Activated CD4-positive, alpha-beta memory T cell treated with anti-CD3 and anti-CD28 coated beads, Interleukin-2, amount 10 ng/mL, durations not matched to agents 7 days and 5 days (primary cell): ENCODE measurements at regions of chr4 and their contacts with region 1.

Region 1: DNA sequence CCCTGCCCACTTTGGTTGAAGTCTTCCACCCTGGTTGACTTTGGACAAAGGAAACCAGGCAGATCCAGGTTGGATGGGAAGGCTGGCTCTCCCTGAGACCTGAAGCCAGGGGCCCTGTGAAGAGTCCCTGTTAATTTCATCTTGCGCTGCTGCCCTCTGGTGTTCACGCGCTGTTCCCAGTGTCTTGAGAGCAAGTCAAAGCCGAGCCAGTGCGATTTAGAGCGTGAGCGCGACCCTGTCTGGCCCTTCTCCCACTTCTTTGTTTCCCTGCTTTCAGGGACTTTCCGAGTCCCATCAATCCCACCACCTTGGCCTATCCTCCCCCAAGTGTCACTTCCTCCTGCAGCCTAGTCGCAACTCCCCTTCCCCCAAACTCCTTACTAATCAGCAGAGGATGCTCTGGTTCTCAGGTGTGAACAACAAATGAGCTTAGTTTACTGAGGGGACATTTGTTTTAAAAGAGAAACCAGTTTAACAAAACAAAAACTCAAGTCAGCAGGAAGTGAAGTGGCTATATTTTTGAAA is 25.8 kb upstream of the CHRNA9 start:
- DNase-seq: peak; percentile 92
- H3K4me3 Mint-ChIP-seq: peak overlapping the region; percentile 73
- H3K27ac Mint-ChIP-seq: peak overlapping the region; percentile 98
- H3K4me1 Mint-ChIP-seq: peaks cover 71% of the 10 kb centered on the region
- H3K27me3 Mint-ChIP-seq: peaks cover 5% of the 10 kb centered on the region

Region 2: DNA sequence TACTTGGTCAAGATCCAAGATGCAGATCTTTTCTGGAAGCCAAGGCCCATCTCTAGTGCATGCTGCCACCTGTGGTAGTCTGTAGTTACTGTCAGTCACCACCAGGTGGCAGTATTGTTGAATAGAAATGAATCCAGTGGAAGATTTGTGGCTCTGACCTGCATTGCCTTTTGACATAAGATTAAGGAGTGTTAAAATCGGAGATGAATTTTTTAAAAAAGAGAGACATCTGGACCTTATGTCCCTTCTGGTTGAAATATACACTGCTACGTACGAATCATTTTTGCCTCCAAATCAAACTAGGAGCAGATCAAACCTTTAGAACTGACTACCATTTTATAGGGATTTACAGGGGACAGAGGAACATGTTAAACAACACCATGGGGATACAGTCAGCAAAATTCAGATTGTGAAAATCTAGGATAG is 159.3 kb before region 1 on chr4:
- CTCF ChIA-PET with region 1: interaction called, 19 read pairs
- POLR2A ChIA-PET with region 1: interaction called, 6 read pairs
- DNase-seq: peak; percentile 71
- H3K4me3 Mint-ChIP-seq: no peak overlapping the region
- H3K27ac Mint-ChIP-seq: no peak overlapping the region
- H3K4me1 Mint-ChIP-seq: peaks cover 17% of the 10 kb centered on the region
- H3K27me3 Mint-ChIP-seq: no peaks in the 10 kb centered on the region

Region 3: DNA sequence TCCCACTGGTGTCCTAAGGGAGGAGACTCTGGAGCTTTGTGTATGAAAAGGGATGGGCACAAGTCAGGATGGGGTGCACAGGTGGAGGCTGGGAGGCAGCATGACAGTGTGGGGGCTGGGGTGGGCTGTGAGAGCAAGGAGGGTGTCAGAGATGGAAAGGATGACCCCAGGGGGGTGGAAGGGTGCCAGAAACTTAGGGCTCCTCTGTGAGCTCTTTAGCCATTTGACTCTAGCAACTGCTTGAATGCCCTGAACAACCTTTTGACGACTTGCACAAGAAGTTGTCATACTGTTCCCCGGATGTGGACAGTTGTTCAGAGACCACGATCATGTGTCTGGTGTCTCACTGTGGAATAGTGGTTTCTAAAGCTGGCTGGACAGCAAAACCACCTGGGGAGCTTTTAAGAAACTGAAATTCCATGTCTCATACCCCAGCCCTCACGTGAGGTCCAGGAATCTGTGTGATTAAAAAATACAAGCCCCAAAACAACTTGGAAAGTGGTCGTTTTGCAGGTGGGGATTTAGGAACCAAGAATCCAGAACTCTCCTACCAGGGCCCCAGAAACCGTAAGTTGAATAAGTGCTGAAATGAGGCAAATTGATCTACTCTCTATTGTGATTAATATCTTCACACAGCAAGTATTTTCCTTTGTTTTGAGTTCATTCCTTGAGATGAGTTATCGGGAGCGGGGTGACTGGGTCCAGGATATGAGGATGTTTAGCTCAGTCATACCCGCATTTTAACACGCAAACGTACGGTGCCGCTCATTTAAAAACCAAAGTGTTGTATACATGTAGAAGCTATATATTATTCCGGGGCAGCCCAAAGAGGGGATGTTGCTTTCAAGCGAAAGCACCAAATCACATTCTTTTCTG is 109.1 kb before region 1 on chr4:
- CTCF ChIA-PET with region 1: interaction called, 20 read pairs
- POLR2A ChIA-PET with region 1: interaction called, 143 read pairs
- DNase-seq: peak; percentile 86
- H3K4me3 Mint-ChIP-seq: peak overlapping the region; percentile 97
- H3K27ac Mint-ChIP-seq: peak overlapping the region; percentile 99
- H3K4me1 Mint-ChIP-seq: peaks cover 43% of the 10 kb centered on the region
- H3K27me3 Mint-ChIP-seq: no peaks in the 10 kb centered on the region

Region 4: DNA sequence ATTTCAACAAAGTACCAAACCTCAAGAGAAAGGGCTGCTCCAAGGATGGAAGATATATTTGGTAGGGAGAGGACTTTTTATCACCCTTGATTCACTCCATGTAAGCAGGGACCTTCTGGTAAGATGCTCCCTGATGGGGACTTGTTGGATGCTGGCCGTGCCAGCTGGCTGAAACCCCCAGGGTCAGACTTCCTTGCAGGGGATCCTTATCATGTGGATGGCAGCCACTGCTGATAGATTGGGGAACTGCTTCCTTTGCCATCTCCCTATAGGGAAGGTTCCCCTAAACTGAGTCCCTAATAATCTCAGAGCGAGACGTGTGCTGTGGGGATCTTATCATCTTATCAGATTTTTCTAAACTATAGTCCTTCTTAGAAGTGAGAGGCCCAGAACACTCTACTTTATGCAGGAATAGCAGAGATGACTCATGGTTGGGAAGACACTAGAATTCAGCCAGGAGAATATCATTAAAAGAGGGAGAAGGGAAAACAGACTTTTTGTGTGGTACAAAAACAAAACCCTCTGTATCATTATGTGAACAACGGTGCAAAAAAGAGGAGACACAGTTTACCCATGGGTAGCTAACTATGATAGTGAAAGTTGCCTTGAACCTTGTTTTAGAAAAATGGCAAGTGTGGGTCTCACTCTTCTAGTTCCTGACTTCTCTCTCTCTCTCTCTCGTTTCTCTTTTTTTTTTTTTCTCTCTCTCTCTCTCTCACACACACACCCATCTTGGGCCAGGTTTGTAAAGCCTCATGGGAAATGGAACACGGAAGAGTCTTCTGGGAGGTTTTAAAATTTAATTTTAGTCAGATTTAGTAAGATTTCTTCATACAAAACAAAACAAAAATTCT is 96.4 kb before region 1 on chr4:
- CTCF ChIA-PET with region 1: interaction called, 10 read pairs
- POLR2A ChIA-PET with region 1: interaction called, 104 read pairs
- DNase-seq: no peak
- H3K4me3 Mint-ChIP-seq: peak overlapping the region; percentile 74
- H3K27ac Mint-ChIP-seq: peak overlapping the region; percentile 80
- H3K4me1 Mint-ChIP-seq: peaks cover 92% of the 10 kb centered on the region
- H3K27me3 Mint-ChIP-seq: no peaks in the 10 kb centered on the region

Region 5: GRCh38 chr4:40238700-40239548 is 70.4 kb before region 1 on chr4:
- CTCF ChIA-PET with region 1: interaction called, 22 read pairs
- POLR2A ChIA-PET with region 1: interaction called, 24 read pairs
- DNase-seq: peak; percentile 87
- H3K4me3 Mint-ChIP-seq: peak overlapping the region; percentile 67
- H3K27ac Mint-ChIP-seq: peak overlapping the region; percentile 93
- H3K4me1 Mint-ChIP-seq: peaks cover 89% of the 10 kb centered on the region
- H3K27me3 Mint-ChIP-seq: no peaks in the 10 kb centered on the region

Region 6: DNA sequence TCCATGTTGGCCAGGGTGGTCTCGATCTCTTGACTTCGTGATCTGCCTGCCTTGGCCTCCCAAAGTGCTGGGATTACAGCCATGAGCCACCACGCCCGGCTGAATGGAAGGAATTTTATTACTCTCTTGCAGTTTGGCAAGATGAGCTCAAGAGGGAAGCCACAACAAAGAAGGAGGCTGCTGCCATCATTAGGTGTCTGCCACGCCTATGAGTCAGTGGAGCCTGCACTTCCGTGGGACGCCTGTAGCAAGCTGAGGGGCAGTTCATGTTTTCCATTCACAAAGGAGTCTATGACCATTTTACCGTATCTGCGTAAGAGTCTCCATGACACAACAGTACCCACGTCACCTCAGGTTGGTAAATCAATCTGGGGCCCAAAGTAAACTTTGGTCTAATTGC is 25.3 kb before region 1 on chr4:
- CTCF ChIA-PET with region 1: interaction called, 17 read pairs
- POLR2A ChIA-PET with region 1: interaction called, 21 read pairs
- DNase-seq: peak; percentile 78
- H3K4me3 Mint-ChIP-seq: no peak overlapping the region
- H3K27ac Mint-ChIP-seq: peak overlapping the region; percentile 71
- H3K4me1 Mint-ChIP-seq: peaks cover 30% of the 10 kb centered on the region
- H3K27me3 Mint-ChIP-seq: no peaks in the 10 kb centered on the region

Region 7: DNA sequence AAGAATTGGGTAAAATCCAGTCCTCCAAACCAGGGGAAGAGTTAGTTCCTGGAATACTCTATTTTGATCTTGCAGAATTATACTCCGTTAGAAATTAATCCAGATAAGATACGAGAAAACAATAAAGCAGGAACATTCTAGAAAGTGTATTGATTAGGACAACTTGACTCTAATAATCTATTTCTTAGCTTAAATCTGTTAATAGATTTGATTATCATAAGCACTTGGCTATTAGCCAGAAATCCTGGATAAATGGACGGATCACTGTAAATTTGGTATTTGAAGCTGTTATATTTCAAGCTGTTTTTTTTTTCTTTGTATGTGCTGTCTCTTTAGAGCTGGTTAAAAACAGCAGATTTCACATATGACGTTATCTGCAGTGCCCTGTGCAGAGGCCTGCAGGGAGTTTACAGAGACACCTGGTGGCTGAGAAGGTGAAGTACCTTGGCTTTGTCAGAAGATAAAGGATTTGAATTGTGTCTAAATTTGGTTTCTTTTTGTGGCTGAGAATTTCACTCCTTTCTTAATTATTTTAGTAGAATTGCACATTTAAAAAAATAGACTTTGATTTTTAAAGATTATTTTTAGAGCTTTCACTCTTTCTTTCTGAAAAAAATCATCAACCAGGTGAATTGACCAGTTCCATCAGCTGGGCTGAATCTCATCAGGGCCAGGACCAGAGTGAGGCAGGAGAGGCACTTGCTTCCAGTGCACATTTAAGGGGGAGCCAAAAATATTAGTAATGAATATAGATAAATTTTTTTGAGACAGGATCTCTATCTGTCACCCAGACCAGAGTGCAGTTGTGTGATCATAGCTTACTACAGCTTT is 16.1 kb after region 1 on chr4:
- CTCF ChIA-PET with region 1: interaction called, 20 read pairs
- POLR2A ChIA-PET with region 1: interaction called, 4 read pairs
- DNase-seq: peak; percentile 69
- H3K4me3 Mint-ChIP-seq: no peak overlapping the region
- H3K27ac Mint-ChIP-seq: no peak overlapping the region
- H3K4me1 Mint-ChIP-seq: peaks cover 18% of the 10 kb centered on the region
- H3K27me3 Mint-ChIP-seq: peaks cover 2% of the 10 kb centered on the region

Region 8: GRCh38 chr4:40976343-40976742 is 667.0 kb after region 1 on chr4:
- CTCF ChIA-PET with region 1: no interaction called
- POLR2A ChIA-PET with region 1: no interaction called
- DNase-seq: no peak
- H3K4me3 Mint-ChIP-seq: no peak overlapping the region
- H3K27ac Mint-ChIP-seq: no peak overlapping the region
- H3K4me1 Mint-ChIP-seq: no peaks in the 10 kb centered on the region
- H3K27me3 Mint-ChIP-seq: peaks cover 6% of the 10 kb centered on the region